Esophagus muscularis mucosa (tissue), 4 donors: ENCODE measurements at regions of chr10 and their contacts with region 1.

Region 1: DNA sequence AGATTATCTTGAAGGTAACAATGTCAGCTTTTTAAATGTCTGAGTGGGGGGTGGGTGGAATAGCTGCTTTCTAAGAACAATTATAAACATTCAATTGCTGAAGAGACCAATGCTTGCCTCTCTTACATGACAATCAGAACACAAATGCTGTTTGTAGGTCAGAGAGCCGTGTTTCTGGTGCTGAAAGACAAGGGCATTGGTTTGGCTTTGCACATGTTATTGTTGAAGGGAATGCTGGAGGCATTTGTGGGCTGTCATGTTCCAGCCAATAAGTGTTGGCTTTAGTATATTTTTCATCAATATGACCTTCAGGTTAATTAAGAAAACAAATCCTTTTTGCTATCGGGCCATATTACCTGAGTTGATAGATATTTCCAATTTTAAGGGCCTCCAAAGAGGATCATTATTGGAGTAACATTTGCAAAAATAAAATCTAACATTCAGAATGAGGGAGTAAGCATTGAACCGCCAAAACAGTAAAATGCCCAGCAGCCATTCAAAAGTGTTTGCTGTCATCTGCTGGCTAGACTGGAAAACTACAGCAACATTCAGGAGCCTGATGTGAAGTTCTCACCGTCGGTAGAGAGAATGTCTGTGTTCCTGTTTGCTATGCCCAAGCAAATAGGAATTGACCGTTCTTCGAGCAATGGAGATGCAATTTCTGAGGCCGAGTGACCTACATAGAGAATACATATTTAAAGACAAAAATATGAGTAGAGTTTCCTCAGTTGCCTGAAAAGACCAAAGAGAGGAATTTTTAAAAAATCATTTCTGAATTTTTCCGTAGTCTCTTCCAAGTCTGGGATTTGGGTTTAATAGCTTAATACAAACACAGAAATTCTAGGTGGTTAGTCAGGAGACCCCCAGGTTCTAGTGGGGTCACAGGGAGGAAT is 118.9 kb downstream of the APBB1IP start:
- DNase-seq: no peak
- H3K4me3 ChIP-seq: no peak overlapping the region
- H3K27ac ChIP-seq: no peak overlapping the region
- H3K4me1 ChIP-seq: peaks cover 0 to 10% (median 4%) of the 10 kb centered on the region in 4 donors
- H3K27me3 ChIP-seq: peaks cover 0 to 29% (median 0%) of the 10 kb centered on the region in 4 donors
- CTCF ChIP-seq: peak; percentile 63 to 78 (median 70)
- EP300 ChIP-seq: no peak
- POLR2A ChIP-seq: no peak

Region 2: GRCh38 chr10:25875556-25876165 is 681.3 kb before region 1 on chr10:
- intact Hi-C with region 1: loop called (anchors 5 kb)
- DNase-seq: no peak
- H3K4me3 ChIP-seq: no peak overlapping the region
- H3K27ac ChIP-seq: no peak overlapping the region
- H3K4me1 ChIP-seq: no peaks in the 10 kb centered on the region
- H3K27me3 ChIP-seq: peaks cover 0 to 2% (median 0%) of the 10 kb centered on the region in 4 donors
- CTCF ChIP-seq: peak; percentile 53 to 81 (median 65)
- EP300 ChIP-seq: no peak
- POLR2A ChIP-seq: no peak

Region 3: DNA sequence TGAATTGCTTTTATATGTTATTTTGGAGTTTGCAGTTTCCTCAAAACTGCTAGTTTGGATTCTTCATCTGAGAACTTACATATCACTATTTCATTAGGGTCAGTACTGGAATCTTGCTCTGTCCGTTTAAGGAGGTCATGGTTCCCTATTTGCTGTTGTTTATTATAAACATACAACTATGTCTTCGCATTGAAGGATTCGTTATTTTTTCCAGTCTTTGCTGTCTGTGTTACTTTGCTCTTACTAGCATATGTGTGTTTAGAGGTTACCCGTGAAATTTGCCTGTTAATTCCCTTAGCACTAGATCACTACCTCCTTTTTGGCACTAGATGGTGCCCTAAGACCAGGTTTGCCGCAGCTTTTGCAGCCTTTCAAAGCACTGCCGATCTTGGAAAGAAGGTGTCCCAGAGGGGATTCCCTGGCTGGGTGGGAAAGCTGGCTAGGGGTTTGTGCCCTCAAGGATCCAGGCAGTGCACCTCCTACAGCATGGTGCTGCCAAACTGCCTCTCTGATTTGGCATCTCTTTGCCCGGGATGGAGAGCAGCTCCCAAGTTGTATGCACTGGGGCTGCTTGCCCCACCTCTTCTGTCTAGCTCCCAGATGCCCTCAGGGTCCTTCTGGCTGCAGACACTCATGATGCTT is 221.9 kb before region 1 on chr10:
- intact Hi-C with region 1: loop called (anchors 5 kb)
- DNase-seq: no peak
- H3K4me3 ChIP-seq: peak overlapping the region in 3 of 4 donors; percentile 5 to 41 (median 14)
- H3K27ac ChIP-seq: no peak overlapping the region
- H3K4me1 ChIP-seq: peaks cover 0 to 3% (median 0%) of the 10 kb centered on the region in 4 donors
- H3K27me3 ChIP-seq: peaks cover 0 to 7% (median 0%) of the 10 kb centered on the region in 4 donors
- CTCF ChIP-seq: peak; percentile 38 to 55 (median 54)
- EP300 ChIP-seq: no peak
- POLR2A ChIP-seq: no peak